B cell (primary cell): ENCODE measurements at regions of chr1 and their contacts with region 1.

Region 1: GRCh38 chr1:32082022-32082421 is 9.3 kb downstream of the TMEM39B start:
- DNase-seq: no peak
- ATAC-seq: no peak
- H3K4me3 ChIP-seq: no peak overlapping the region
- H3K4me3 Mint-ChIP-seq: peak overlapping the region; percentile 13
- H3K27ac ChIP-seq: peak overlapping the region in 1 of 2 donors; percentile 27
- H3K27ac Mint-ChIP-seq: peak overlapping the region; percentile 26
- H3K4me1 ChIP-seq: peaks cover 3 to 6% of the 10 kb centered on the region in 2 donors
- H3K4me1 Mint-ChIP-seq: peaks cover 16% of the 10 kb centered on the region
- H3K27me3 ChIP-seq: no peaks in the 10 kb centered on the region
- H3K27me3 Mint-ChIP-seq: no peaks in the 10 kb centered on the region
- CTCF ChIP-seq: no peak

Region 2: GRCh38 chr1:32100807-32101697 is 19.0 kb after region 1 on chr1:
- CTCF ChIA-PET with region 1: no interaction called
- POLR2A ChIA-PET with region 1: interaction called, 11 read pairs
- intact Hi-C with region 1: no loop called
- DNase-seq: no peak
- ATAC-seq: no peak
- H3K4me3 ChIP-seq: no peak overlapping the region
- H3K4me3 Mint-ChIP-seq: no peak overlapping the region
- H3K27ac ChIP-seq: no peak overlapping the region
- H3K27ac Mint-ChIP-seq: no peak overlapping the region
- H3K4me1 ChIP-seq: no peaks in the 10 kb centered on the region
- H3K4me1 Mint-ChIP-seq: no peaks in the 10 kb centered on the region
- H3K27me3 ChIP-seq: no peaks in the 10 kb centered on the region
- H3K27me3 Mint-ChIP-seq: no peaks in the 10 kb centered on the region
- CTCF ChIP-seq: no peak